ENCODE measurements at regions of chr12 and their contacts with region 1.

Region 1: GRCh38 chr12:118979763-118980406 is 1.5 kb upstream of the SRRM4 start:
- DNase-seq: peak; percentile 21 to 81 (median 46)
- H3K4me3 ChIP-seq: no peak overlapping the region
- H3K27ac ChIP-seq: no peak overlapping the region
- H3K4me1 ChIP-seq: no peaks in the 10 kb centered on the region
- H3K27me3 ChIP-seq: peaks cover 30% of the 10 kb centered on the region
- CTCF ChIP-seq: peak; percentile 45 to 69 (median 60)
- POLR2A ChIP-seq: no peak

Region 2: GRCh38 chr12:118480235-118480634 is 499.6 kb before region 1 on chr12:
- intact Hi-C with region 1: no loop called
- DNase-seq: no peak
- H3K4me3 ChIP-seq: no peak overlapping the region
- H3K27ac ChIP-seq: peak overlapping the region in 1 of 5 donors; percentile 72
- H3K4me1 ChIP-seq: no peaks in the 10 kb centered on the region
- H3K27me3 ChIP-seq: no peaks in the 10 kb centered on the region
- CTCF ChIP-seq: no peak
- POLR2A ChIP-seq: no peak

Region 3: GRCh38 chr12:119544765-119545625 is 565.1 kb after region 1 on chr12:
- intact Hi-C with region 1: loop called in 1 of 2 experiments (anchors 10 kb)
- DNase-seq: peak; percentile 53 to 82 (median 69)
- H3K4me3 ChIP-seq: no peak overlapping the region
- H3K27ac ChIP-seq: no peak overlapping the region
- H3K4me1 ChIP-seq: no peaks in the 10 kb centered on the region
- H3K27me3 ChIP-seq: no peaks in the 10 kb centered on the region
- CTCF ChIP-seq: peak; percentile 76 to 89 (median 84)
- POLR2A ChIP-seq: no peak